ENCODE measurements at regions of chr1 and their contacts with region 1.

Region 1: DNA sequence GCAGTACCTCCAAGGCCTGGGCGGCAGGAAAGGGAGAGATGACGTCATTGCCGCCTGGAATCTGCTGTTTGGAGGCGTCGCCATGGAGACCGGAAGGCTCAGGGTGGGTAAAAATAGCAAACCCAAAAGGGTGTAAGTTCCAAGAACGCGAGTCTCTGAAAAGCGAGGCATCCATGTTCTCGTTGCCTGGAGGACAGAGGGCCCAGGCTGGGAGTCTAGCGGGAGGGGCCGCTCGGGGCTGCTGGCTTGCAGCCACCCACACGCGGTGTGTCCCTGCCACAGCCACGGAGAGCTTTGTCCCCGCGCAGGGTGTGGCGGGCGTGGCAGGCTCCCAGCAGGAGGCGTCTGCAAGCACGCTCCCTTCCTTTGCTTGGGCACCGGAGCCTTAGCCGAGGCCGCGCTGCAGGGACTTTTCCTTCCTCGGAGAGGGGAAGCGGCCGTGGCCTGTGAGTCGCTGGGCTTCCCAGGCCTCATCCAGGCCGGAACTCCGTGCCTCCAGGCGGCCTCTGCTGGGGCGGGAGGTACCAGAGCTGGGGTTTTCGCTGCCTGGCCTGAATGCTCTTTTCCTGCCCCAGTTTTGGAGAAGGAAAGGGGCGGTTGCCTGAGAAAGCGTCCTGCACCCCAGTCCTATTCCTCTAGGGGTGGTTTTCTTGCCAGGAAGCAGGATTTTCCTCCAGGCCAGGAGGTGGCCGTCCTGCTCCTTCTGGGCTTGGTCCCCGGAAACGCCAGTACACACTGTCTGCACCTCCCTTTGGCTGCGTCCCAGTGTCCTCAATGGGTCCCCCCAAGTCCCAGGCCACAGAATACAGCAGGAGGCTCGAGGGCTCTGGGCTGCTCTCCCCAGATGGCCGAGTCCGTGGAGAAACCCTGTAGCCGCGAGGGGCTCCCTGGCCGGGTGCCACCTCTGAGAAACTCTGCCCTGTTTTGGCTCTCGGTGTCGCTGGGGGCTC is 15.3 kb upstream of the SKI start:
- DNase-seq: peak; percentile 77
- H3K4me3 ChIP-seq: peak overlapping the region; percentile 1 to 27 (median 14)
- H3K27ac ChIP-seq: peak overlapping the region; percentile 79
- H3K4me1 ChIP-seq: peaks cover 46% of the 10 kb centered on the region
- H3K27me3 ChIP-seq: no peaks in the 10 kb centered on the region
- CTCF ChIP-seq: peak; percentile 22 to 44

Region 2: DNA sequence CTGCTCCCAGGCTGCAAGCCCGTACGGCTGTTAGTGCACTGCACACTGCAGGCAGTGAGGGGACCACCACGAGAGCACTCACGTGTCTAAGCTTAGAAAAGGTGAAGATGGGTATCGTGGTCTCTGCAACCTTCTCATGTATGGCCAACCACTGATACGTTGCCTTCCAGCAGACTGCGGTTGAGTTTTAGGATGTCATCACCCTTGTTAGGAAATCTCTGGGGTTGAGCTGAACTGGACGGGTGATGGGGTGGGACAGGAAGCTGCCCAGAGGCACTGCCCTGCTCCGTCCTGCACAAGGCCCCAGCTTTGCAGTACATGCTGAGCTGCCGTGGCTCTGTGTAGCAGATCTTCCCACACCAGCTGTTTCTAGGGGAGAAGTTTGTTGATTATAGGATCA is 61.6 kb before region 1 on chr1:
- CTCF ChIA-PET with region 1: no interaction called
- dilution Hi-C with region 1: loop called (anchors 10 kb)
- in situ Hi-C with region 1: no loop called
- intact Hi-C with region 1: no loop called
- DNase-seq: no peak
- H3K4me3 ChIP-seq: no peak overlapping the region
- H3K27ac ChIP-seq: no peak overlapping the region
- H3K4me1 ChIP-seq: no peaks in the 10 kb centered on the region
- H3K27me3 ChIP-seq: no peaks in the 10 kb centered on the region
- CTCF ChIP-seq: no peak

Region 3: GRCh38 chr1:2314803-2315673 is 102.2 kb after region 1 on chr1:
- CTCF ChIA-PET with region 1: no interaction called
- dilution Hi-C with region 1: no loop called
- in situ Hi-C with region 1: no loop called
- intact Hi-C with region 1: loop called (anchors 5 kb)
- DNase-seq: no peak
- H3K4me3 ChIP-seq: peak overlapping the region in 2 of 3 experiments; percentile 38 to 49
- H3K27ac ChIP-seq: no peak overlapping the region
- H3K4me1 ChIP-seq: peaks cover 15% of the 10 kb centered on the region
- H3K27me3 ChIP-seq: no peaks in the 10 kb centered on the region
- CTCF ChIP-seq: peak; percentile 21 to 58